Activated CD4-positive, alpha-beta T cell treated with anti-CD3 and anti-CD28 coated beads, Interleukin-2, amount 10 ng/mL, durations not matched to agents 7 days and 5 days (primary cell): ENCODE measurements at regions of chr2 and their contacts with region 1.

Region 1: DNA sequence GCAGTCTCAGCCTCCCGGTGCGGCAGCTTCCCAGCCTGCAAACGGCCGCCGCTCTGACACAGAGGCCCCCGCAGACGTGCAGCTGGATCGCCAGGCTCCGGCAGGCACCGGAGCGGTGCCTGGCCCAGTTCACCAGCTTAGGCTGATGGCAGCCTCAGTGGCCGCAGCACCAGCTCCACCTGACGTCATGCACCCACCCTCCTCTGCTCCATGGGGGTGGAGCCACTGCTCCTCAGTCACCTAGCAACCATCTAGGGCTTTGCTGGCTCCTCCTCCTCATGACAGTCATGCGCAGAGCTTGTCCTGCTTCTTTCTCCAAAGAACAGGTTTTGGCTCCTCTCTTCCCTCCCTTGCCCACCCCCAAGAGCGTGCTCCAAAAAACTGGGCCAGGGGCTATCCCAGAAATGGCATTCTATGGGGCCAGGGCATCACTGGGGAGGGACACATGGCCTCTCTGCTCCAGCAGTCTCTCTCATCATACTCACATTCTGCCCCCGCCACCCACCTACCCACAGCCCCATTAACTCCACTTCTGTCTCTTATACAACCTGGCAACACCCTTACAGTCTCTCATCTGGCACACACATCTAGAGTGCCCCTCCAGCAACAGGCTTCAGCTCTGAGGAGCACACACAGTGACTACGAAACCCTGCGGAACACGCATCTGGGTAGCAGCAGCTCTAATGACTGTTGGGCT is 5.5 kb downstream of the DCTN1 start:
- DNase-seq: no peak
- H3K4me3 Mint-ChIP-seq: no peak overlapping the region
- H3K27ac Mint-ChIP-seq: peak overlapping the region; percentile 37
- H3K4me1 Mint-ChIP-seq: peaks cover 16% of the 10 kb centered on the region
- H3K27me3 Mint-ChIP-seq: no peaks in the 10 kb centered on the region

Region 2: DNA sequence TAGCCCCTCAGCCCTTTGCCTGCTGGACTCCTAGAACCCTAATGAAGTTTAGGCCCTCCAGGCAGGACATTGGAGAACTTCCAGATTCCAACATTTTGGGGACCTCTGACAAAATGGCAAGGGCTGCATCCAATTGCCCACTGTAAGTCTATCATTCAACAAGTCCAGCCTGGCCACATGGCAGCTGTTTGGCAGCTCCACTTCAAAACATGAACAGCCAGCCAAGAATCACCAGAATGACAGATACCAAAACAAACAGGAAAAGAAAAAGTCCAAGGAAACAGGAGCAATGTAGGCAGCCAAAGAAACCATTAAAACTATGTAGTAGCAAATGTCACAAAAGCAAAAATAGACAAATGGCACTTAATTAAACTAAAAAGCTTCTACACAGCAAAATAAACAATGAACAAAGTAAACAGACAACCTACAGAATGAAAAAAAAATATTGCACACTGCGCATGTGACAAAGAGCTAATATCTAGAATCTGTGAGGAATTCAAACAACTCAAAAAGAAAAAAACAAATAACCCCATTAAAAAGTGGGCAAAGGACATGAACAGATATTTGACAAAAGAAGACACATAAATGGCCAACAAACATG is 56.9 kb before region 1 on chr2:
- CTCF ChIA-PET with region 1: no interaction called
- POLR2A ChIA-PET with region 1: no interaction called
- DNase-seq: no peak
- H3K4me3 Mint-ChIP-seq: no peak overlapping the region
- H3K27ac Mint-ChIP-seq: no peak overlapping the region
- H3K4me1 Mint-ChIP-seq: no peaks in the 10 kb centered on the region
- H3K27me3 Mint-ChIP-seq: no peaks in the 10 kb centered on the region

Region 3: GRCh38 chr2:74361327-74361726 is 13.3 kb before region 1 on chr2:
- CTCF ChIA-PET with region 1: no interaction called
- POLR2A ChIA-PET with region 1: no interaction called
- DNase-seq: no peak
- H3K4me3 Mint-ChIP-seq: no peak overlapping the region
- H3K27ac Mint-ChIP-seq: no peak overlapping the region
- H3K4me1 Mint-ChIP-seq: no peaks in the 10 kb centered on the region
- H3K27me3 Mint-ChIP-seq: no peaks in the 10 kb centered on the region

Region 4: DNA sequence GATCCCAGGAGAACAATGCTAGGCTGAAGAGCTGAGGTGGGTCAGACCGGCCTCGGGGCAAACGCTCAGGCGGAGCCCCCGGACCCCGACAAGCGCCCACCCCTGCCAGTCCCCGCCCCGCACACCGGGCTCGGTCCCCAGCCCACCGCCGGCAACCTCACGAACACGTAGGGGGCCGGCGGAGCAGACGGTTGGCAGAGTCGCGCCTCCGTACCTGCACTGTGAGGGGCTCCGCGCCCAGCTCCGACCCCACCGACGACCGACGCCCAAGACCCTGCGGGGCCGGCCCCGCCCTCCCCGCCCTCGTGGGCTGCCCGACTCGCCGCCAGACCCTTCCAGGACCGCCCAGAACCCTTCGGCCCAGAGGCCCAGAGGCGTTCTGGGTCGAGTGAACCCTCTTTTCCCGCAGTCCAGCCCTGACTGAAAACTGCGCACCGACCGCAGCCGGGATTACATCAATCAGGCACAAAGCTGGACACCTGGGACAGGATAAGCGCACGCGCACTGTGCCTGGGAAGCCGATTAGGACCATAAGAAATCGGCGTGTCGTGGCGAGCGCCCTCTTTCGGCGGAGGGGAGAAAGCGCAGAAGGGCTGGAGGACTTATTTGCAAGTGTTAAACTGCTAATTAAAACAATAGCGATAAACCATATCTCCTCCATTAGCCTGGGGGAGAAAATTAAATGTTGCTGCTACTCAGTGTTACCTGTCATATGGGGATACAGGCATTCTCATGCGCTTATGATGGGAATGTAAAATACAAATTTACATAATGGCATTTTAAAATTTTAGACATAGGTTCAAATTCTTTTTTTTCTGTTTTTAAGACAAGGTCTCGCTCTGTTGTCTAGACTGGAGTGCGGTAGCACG is 17.2 kb after region 1 on chr2:
- CTCF ChIA-PET with region 1: interaction called, 12 read pairs
- POLR2A ChIA-PET with region 1: no interaction called
- DNase-seq: peak; percentile 97
- H3K4me3 Mint-ChIP-seq: peak overlapping the region; percentile 92
- H3K27ac Mint-ChIP-seq: peak overlapping the region; percentile 99
- H3K4me1 Mint-ChIP-seq: peaks cover 9% of the 10 kb centered on the region
- H3K27me3 Mint-ChIP-seq: peaks cover 8% of the 10 kb centered on the region